ENCODE measurements at regions of chr9 and their contacts with region 1.

Region 1: DNA sequence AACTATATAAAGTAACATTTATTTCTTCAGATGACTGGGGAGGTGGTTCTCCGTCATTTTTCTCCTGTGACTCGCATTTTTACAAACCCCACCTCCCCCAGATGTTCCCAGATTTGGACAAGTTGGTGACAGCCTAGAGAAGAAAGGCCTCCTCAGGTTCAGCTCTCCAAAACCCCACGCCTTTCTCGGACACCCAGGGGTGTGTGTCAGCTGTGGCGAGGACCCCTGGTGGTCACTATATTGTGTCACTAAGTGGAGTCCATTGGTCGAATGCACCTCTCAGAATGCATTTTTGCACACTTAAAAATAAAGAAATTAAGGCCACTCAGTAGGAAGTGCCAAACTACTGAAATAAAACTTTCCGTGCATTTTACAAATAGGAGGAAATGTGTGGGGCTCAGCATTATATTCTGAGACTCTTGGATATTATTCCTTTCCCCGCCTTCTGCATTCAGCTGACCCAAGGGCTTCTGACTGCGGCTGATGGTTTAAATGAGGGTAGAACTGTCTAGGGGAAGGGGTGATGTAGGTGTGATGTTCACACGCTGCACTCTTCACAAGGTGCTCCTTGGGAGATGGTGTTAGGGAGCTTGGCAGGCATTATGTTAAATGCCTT is 47.6 kb downstream of the ACO1 start:
- DNase-seq: no peak
- H3K4me3 ChIP-seq: no peak overlapping the region
- H3K27ac ChIP-seq: no peak overlapping the region
- H3K4me1 ChIP-seq: peaks cover 0 to 6% (median 0%) of the 10 kb centered on the region in 4 donors
- H3K27me3 ChIP-seq: no peaks in the 10 kb centered on the region
- CTCF ChIP-seq: peak; percentile 43 to 58 (median 51)
- EP300 ChIP-seq: no peak
- POLR2A ChIP-seq: no peak

Region 2: GRCh38 chr9:32247168-32247567 is 184.9 kb before region 1 on chr9:
- intact Hi-C with region 1: no loop called
- DNase-seq: no peak
- H3K4me3 ChIP-seq: no peak overlapping the region
- H3K27ac ChIP-seq: no peak overlapping the region
- H3K4me1 ChIP-seq: peaks cover 0 to 8% (median 5%) of the 10 kb centered on the region in 4 donors
- H3K27me3 ChIP-seq: no peaks in the 10 kb centered on the region
- CTCF ChIP-seq: no peak
- EP300 ChIP-seq: no peak
- POLR2A ChIP-seq: no peak

Region 3: DNA sequence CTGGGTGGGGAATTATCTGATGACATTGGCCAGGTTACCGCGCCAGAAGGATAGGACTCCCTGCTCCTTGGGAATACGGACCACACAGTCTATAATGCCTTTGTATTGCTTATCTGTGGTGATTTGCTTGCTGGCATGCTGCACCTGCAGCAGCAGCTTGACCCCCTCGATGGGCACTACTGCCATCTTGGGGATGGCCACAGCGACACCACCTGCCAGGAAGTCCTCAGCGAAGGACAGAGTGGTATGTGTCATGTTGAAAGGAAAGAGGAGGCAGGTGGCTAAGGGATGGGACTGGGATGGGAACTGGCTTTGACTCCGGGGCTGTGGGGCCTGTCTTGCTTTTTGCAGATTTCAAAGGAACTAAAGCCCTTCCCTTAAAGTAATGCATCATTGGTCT is 97.9 kb before region 1 on chr9:
- intact Hi-C with region 1: no loop called
- DNase-seq: no peak
- H3K4me3 ChIP-seq: no peak overlapping the region
- H3K27ac ChIP-seq: no peak overlapping the region
- H3K4me1 ChIP-seq: no peaks in the 10 kb centered on the region
- H3K27me3 ChIP-seq: peaks cover 0 to 3% (median 0%) of the 10 kb centered on the region in 4 donors
- CTCF ChIP-seq: no peak
- EP300 ChIP-seq: no peak
- POLR2A ChIP-seq: no peak

Region 4: DNA sequence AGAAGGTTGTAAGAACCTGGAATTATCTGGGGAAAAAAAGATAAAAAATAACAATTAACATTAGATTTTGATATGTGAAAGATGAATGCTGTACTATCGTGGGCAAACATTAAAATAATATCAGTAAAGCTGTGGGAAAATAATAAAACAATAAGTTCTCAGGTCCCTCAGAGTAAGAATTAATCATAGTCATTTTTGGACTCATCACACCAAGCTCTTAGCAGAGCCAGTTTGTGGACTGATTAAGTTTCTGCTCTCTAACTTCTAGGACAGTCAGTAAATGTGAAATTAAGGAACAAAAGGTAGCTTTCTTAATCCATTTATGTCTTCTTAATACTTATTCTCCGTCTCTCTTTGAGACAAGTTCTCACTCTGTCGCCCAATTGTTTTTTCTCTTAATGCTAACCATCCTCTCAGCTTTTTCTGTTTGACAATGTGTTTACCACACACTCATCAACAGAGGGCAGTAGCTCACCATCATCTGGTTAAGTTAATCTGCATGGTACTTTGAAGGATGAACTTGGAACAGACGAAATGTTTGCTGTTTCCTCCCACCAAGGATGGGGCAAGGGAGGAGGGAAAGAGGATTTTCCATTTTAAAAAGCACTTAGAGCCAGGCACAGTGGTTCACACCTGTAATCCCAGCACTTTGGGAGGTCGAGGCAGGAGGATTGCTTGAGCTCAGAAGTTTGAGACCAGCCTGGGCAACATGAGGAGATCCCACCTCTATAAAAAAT is 52.9 kb before region 1 on chr9:
- intact Hi-C with region 1: loop called (anchors 2 kb)
- DNase-seq: peak; percentile 66
- H3K4me3 ChIP-seq: no peak overlapping the region
- H3K27ac ChIP-seq: no peak overlapping the region
- H3K4me1 ChIP-seq: peaks cover 5 to 19% (median 13%) of the 10 kb centered on the region in 4 donors
- H3K27me3 ChIP-seq: no peaks in the 10 kb centered on the region
- CTCF ChIP-seq: peak; percentile 69 to 83 (median 71)
- EP300 ChIP-seq: no peak
- POLR2A ChIP-seq: no peak

Region 5: DNA sequence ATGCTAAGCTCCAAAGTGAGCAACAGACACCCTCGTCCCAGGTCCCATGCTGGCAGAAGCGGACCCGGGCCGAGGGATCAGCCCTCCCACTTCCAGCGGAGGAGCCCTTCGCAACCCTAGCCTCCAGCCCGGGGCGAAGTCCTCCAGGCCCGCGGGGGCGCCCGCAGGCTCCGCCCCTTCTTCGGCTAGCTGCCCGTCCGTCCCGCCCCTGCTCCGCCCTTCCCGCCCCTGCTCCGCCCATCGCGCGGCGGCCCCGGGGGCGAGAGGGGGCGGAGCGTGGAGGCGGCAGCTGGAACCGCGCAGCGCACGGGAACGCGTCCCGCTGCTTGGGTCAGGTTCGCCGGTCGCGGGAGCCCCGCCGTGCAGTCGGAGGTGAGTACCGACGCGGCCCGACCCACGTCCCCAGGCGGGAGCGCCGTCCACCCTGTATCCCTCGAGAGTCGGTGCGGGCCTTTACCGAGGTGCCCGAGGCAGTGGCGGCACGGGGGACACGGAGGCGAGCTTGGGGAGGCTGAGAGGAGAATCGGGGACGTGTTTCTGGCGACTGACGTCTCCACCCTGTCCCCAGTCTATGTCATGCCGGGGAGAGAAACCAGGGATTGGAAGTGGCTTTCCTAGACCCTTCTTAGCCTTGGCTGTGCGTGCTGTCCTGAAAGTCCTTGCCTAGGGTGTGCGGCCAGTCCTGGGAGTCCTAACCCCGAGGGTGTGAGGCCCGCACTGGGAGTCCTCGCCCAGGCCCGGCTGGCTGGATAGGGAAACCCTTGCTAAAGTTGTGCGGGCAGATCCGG is 47.5 kb before region 1 on chr9 and contains the start of gene ACO1:
- intact Hi-C with region 1: loop called (anchors 2 kb)
- DNase-seq: peak; percentile 93
- H3K4me3 ChIP-seq: peak within 1 kb of the TSS; percentile 76 to 82 (median 80)
- H3K27ac ChIP-seq: peak within 1 kb of the TSS; percentile 86 to 90 (median 90)
- H3K4me1 ChIP-seq: peaks cover 32 to 56% (median 53%) of the 10 kb centered on the region in 4 donors
- H3K27me3 ChIP-seq: no peaks in the 10 kb centered on the region
- CTCF ChIP-seq: peak in 2 of 3 experiments; percentile 13 to 27
- EP300 ChIP-seq: no peak
- POLR2A ChIP-seq: peak; percentile 42
- total RNA-seq, gene ACO1: 64.4 to 91.9 (median 86.5) TPM

Region 6: GRCh38 chr9:32579706-32580331 is 147.8 kb after region 1 on chr9:
- intact Hi-C with region 1: loop called (anchors 2 kb)
- DNase-seq: no peak
- H3K4me3 ChIP-seq: no peak overlapping the region
- H3K27ac ChIP-seq: no peak overlapping the region
- H3K4me1 ChIP-seq: peaks cover 0 to 8% (median 4%) of the 10 kb centered on the region in 4 donors
- H3K27me3 ChIP-seq: peaks cover 0 to 3% (median 0%) of the 10 kb centered on the region in 4 donors
- CTCF ChIP-seq: peak; percentile 86 to 90 (median 89)
- EP300 ChIP-seq: no peak
- POLR2A ChIP-seq: no peak

Measured in esophagus muscularis mucosa (tissue), 4 donors.